ENCODE measurements at regions of chr4 and their contacts with region 1.

Region 1: GRCh38 chr4:71553605-71554004 is 214.8 kb downstream of the SLC4A4 start:
- DNase-seq: peak; percentile 64
- ATAC-seq: peak; percentile 53; the same call in 1 of the 2 replicates
- H3K4me3 ChIP-seq: no peak overlapping the region
- H3K27ac ChIP-seq: no peak overlapping the region
- H3K4me1 ChIP-seq: peaks cover 9% of the 10 kb centered on the region
- H3K27me3 ChIP-seq: no peaks in the 10 kb centered on the region
- CTCF ChIP-seq: peak; percentile 63
- POLR2A ChIP-seq: no peak
- RAD21 ChIP-seq: peak; percentile 85

Region 2: GRCh38 chr4:70637239-70637913 is 916.2 kb before region 1 on chr4:
- CTCF ChIA-PET with region 1: no interaction called
- POLR2A ChIA-PET with region 1: no interaction called
- dilution Hi-C with region 1: no loop called
- in situ Hi-C with region 1: loop called (anchors 25 kb)
- intact Hi-C with region 1: no loop called
- DNase-seq: peak; percentile 24
- ATAC-seq: no peak
- H3K4me3 ChIP-seq: no peak overlapping the region
- H3K27ac ChIP-seq: no peak overlapping the region
- H3K4me1 ChIP-seq: peaks cover 3% of the 10 kb centered on the region; the same call in 1 of the 2 replicates
- H3K27me3 ChIP-seq: no peaks in the 10 kb centered on the region
- CTCF ChIP-seq: no peak
- POLR2A ChIP-seq: no peak
- RAD21 ChIP-seq: no peak

Region 3: GRCh38 chr4:71026086-71026485 is 527.5 kb before region 1 on chr4:
- CTCF ChIA-PET with region 1: no interaction called
- POLR2A ChIA-PET with region 1: no interaction called
- dilution Hi-C with region 1: no loop called
- in situ Hi-C with region 1: loop called (anchors 25 kb)
- intact Hi-C with region 1: no loop called
- DNase-seq: peak; percentile 90
- ATAC-seq: peak; percentile 89
- H3K4me3 ChIP-seq: no peak overlapping the region
- H3K27ac ChIP-seq: no peak overlapping the region
- H3K4me1 ChIP-seq: peaks cover 2% of the 10 kb centered on the region
- H3K27me3 ChIP-seq: no peaks in the 10 kb centered on the region
- CTCF ChIP-seq: no peak
- POLR2A ChIP-seq: no peak
- RAD21 ChIP-seq: no peak

Region 4: GRCh38 chr4:71229477-71230270 is 323.9 kb before region 1 on chr4:
- CTCF ChIA-PET with region 1: interaction called, 5 read pairs
- POLR2A ChIA-PET with region 1: no interaction called
- dilution Hi-C with region 1: no loop called
- in situ Hi-C with region 1: no loop called
- intact Hi-C with region 1: loop called (anchors 2 kb)
- DNase-seq: peak; percentile 81
- ATAC-seq: peak; percentile 56
- H3K4me3 ChIP-seq: no peak overlapping the region
- H3K27ac ChIP-seq: peak overlapping the region; percentile 57
- H3K4me1 ChIP-seq: peaks cover 19% of the 10 kb centered on the region
- H3K27me3 ChIP-seq: no peaks in the 10 kb centered on the region
- CTCF ChIP-seq: peak; percentile 75
- POLR2A ChIP-seq: no peak
- RAD21 ChIP-seq: peak; percentile 83

Region 5: DNA sequence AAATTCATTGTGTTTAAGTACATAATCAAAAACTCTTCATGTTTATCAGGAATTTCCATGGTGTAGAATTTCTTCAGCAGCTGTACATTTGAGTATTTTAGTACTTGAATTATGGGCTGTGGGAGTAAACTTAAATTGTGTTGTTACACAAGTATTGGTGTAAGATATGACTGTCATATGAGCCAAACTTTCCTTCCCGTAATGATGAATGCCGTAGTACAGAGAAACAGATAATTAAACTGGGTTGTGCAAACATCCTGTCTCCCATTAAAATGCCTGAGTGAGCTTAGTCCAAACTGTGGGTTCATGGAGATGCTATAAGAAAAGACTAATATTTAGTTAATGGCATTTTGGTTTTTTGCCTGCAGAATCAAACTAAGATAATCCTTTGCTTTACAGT is 55.6 kb before region 1 on chr4:
- CTCF ChIA-PET with region 1: no interaction called
- POLR2A ChIA-PET with region 1: interaction called, 19 read pairs
- dilution Hi-C with region 1: no loop called
- in situ Hi-C with region 1: no loop called
- intact Hi-C with region 1: no loop called
- DNase-seq: peak; percentile 69
- ATAC-seq: peak; percentile 81
- H3K4me3 ChIP-seq: no peak overlapping the region
- H3K27ac ChIP-seq: no peak overlapping the region; the same call in 1 of the 2 replicates
- H3K4me1 ChIP-seq: peaks cover 3% of the 10 kb centered on the region; the same call in 1 of the 2 replicates
- H3K27me3 ChIP-seq: no peaks in the 10 kb centered on the region
- CTCF ChIP-seq: no peak
- POLR2A ChIP-seq: no peak
- RAD21 ChIP-seq: no peak

Region 6: DNA sequence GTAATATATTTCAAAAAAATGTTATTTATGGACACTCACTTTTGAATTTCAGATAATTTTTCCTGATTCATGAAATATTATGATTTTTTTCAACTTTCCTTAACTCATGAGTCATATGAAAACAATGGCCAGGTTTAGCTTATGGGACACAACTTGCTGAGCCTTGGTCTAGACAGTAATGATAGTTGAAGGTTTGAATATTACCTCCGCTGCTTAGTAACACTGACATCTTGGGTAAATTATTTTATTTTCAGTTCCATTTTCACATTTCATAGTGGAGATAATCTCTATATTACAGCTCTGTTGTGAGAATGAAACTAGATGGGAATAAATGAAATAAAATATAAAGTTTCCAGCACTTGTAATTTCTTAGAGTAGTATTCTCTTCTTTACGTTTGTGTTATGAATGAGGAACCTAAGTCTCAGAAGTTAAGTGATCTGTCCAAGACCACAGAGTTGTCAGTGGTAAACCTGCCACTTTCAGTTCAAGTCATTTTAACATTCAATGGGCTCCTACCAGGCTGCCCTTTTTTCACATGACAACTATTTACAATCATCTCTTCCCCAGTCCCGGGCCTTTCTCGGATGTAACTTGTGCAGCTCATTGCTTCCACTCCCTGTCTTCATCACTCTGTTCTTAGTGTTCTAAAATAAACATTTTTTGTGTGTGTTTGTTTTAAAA is 277.0 kb after region 1 on chr4:
- CTCF ChIA-PET with region 1: no interaction called
- POLR2A ChIA-PET with region 1: no interaction called
- dilution Hi-C with region 1: no loop called
- in situ Hi-C with region 1: no loop called
- intact Hi-C with region 1: no loop called
- DNase-seq: no peak
- ATAC-seq: no peak
- H3K4me3 ChIP-seq: no peak overlapping the region
- H3K27ac ChIP-seq: no peak overlapping the region
- H3K4me1 ChIP-seq: no peaks in the 10 kb centered on the region
- H3K27me3 ChIP-seq: no peaks in the 10 kb centered on the region
- CTCF ChIP-seq: no peak
- POLR2A ChIP-seq: no peak
- RAD21 ChIP-seq: no peak

Region 7: DNA sequence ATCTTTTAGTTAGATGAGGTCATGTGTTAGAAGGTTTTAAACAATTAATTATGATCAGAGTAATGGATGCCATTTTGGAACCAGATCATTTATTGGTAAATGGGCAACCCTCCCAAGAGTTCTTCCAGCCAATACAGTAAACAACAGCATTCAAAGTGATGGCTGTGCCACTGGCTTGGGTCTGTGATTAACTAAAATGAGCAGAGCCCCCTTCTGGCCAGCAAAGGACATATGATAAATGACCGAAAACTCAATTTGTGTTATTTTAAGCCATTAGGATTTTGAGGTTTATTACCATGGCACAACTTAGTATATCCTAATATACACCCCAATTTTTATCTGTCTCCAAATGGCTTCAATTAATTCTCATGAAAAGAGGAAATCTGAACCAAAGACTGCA is 387.4 kb after region 1 on chr4:
- CTCF ChIA-PET with region 1: no interaction called
- POLR2A ChIA-PET with region 1: no interaction called
- dilution Hi-C with region 1: no loop called
- in situ Hi-C with region 1: no loop called
- intact Hi-C with region 1: no loop called
- DNase-seq: peak; percentile 0
- ATAC-seq: no peak
- H3K4me3 ChIP-seq: no peak overlapping the region
- H3K27ac ChIP-seq: no peak overlapping the region
- H3K4me1 ChIP-seq: no peaks in the 10 kb centered on the region
- H3K27me3 ChIP-seq: no peaks in the 10 kb centered on the region
- CTCF ChIP-seq: peak; percentile 28; the same call in 1 of the 2 replicates
- POLR2A ChIP-seq: no peak
- RAD21 ChIP-seq: no peak

Measured in IMR-90 (cell line).